Right ventricle myocardium inferior (tissue), 1 donor: ENCODE measurements at regions of chr2 and their contacts with region 1.

Region 1: DNA sequence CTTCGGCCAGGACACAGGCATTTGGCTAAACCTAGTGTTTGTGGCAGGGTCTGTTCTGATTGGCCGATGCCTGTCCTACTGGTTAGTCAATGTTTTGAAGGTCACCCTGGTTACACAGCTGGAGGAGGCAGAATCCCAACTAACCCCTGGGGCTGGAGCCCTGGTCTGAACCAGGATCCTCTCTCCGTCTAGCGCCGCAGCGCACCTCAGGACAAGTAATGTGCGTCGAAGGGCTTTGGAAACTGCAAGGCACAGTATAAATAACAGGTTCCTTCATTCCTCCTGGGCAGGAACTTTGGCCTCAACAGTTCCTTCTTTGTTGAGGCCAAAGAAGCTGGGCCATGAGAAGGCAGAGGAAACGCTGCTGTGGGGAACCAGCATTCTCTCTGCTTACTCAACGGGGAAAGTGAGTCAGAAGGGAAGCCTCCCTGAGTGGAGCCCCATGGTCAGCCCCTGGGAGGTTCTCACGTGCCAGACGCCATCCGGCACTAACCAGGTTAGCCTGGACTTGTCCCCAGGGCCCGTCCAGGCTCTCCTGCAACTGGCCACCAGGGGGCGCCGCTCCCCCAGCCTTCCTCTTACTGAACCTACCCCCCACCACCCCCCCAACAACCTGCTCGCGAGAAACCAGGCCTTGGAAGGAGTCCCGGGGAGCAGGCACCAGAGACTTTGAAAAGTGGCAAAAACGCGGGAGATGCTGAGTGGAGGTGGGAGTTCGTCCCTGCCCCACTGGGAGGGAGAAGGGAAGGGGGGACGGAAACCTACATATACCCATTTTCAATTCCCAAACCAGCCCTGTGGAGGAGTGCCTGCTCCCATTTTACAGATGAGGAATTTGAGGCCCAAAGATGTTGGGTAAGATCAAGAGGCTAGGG is 19.8 kb downstream of the TEX44 start:
- DNase-seq: peak; percentile 96
- ATAC-seq: peak; percentile 70

Region 2: DNA sequence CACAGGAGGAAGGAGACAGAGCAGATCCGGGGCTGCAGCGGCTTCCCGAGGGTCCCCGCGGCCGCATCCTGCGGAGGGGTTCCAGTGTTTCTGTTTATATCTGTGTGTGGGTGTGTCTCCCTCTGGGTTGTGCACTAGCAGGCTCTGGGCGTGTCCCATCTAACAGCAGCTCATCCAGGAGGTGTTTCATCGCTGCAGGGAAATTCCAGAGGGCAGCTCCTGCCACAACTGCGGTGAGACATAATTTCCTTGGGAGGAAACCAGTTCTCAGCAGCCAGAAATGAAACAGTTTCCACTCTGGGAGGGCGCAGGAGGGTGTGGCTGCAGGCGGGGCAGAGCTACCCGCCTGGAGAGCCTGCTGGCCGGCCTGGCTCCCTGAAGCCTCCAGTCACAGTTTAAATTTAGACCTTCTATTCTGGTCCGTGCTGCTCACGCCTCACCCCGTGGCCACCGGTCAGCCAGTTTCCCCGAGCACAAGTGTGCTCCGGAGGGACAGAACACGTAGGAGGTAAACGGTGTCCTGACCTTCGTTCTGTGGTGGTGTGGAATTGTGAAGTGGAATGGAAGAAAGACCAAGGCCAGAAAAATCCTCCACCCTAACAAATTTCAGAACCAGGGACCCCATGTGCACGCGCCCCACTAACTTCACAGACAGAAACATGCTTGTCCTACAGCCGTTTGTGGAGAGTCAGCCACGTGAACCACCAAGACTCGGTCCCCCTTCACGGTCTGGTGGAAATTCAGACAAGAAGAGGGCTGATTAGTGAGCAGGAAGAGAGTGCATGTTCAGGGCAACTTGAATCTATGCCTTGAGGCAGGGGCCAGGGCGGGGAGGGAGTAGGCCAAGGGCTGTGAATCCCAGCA is 30.4 kb after region 1 on chr2:
- intact Hi-C with region 1: loop called (anchors 1 kb)
- DNase-seq: peak; percentile 84
- ATAC-seq: peak; percentile 93

Region 3: DNA sequence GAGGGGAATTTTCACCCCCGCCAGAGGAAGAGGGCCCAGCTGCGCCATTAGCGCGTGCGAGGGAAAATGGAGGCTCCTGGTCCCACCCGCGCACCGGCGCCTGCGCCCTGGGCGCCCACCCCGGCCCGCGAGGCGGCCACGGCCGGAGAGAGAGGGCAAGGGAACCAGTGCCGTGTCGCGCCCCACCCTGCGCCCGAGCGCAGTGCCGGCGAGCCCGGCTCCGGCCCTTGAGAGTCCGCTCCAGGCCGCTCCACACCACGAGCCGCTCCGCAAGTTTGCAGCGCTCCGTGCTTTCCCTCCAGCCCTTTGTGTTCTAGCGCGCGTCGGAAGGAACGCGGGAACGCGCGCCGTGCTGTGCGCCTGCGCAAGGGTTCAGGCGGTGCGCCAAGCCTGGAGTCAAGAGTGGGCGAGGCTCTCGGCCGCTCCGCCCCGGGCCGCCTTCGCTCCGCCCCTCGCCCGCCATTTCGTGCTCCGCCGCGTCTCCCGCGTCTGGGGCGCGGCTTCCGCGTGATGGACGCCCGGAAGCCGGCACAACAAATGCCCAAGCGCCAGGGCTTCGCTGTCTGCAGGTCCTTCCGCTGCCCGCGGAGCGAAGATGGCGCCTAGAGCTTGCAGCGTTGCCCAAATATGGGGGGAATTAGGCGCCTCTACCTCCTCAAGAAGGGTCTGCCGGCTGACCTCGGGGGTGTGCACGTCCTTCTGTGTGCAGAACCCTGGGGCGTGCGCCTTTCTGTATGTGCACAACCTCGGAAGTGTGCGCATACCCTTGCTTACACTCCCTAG is 49.8 kb after region 1 on chr2:
- intact Hi-C with region 1: loop called (anchors 1 kb)
- DNase-seq: peak; percentile 97
- ATAC-seq: peak; percentile 80

Region 4: GRCh38 chr2:231674587-231675338 is 62.3 kb after region 1 on chr2:
- intact Hi-C with region 1: loop called (anchors 1 kb)
- DNase-seq: peak; percentile 82
- ATAC-seq: peak; percentile 61

Region 5: DNA sequence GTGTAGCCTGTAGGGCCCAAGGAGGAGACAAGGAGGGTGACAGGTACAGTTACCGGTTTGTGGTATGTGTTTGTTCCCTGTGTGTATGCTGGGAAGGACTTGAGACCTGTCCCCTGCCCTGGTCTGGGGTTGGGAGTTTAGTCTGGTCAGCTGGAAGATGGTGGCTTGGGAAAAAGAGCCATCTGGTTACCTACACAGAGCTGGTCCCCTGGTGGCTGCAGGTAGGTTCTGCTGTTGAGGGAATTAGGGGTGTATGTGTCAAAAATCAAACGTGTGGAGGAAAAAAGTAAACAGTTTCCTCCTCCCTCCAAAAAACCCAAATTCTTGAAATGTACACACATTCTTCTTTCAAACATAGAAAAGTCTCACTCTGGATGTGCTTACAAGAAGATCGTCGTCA is 120.2 kb after region 1 on chr2:
- intact Hi-C with region 1: no loop called
- DNase-seq: no peak
- ATAC-seq: no peak